ENCODE measurements at regions of chr2 and their contacts with region 1.

Region 1: GRCh38 chr2:178112202-178113152 is at the start of gene RBM45:
- DNase-seq: peak; percentile 68 to 91 (median 78)
- ATAC-seq: peak; percentile 97
- H3K4me3 ChIP-seq: peak within 1 kb of the TSS; percentile 90
- H3K4me3 Mint-ChIP-seq: peak within 1 kb of the TSS; percentile 92 to 96 (median 94)
- H3K27ac ChIP-seq: peak within 1 kb of the TSS; percentile 71
- H3K27ac Mint-ChIP-seq: peak within 1 kb of the TSS; percentile 80 to 93 (median 88)
- H3K4me1 ChIP-seq: peaks cover 6 to 14% of the 10 kb centered on the region in 2 donors
- H3K4me1 Mint-ChIP-seq: peaks cover 20 to 47% (median 39%) of the 10 kb centered on the region in 7 donors
- H3K27me3 ChIP-seq: no peaks in the 10 kb centered on the region
- H3K27me3 Mint-ChIP-seq: peaks cover 0 to under 1% (median 0%) of the 10 kb centered on the region in 5 donors
- total RNA-seq, gene RBM45: 8.0 to 26.7 (median 17.5) TPM

Region 2: DNA sequence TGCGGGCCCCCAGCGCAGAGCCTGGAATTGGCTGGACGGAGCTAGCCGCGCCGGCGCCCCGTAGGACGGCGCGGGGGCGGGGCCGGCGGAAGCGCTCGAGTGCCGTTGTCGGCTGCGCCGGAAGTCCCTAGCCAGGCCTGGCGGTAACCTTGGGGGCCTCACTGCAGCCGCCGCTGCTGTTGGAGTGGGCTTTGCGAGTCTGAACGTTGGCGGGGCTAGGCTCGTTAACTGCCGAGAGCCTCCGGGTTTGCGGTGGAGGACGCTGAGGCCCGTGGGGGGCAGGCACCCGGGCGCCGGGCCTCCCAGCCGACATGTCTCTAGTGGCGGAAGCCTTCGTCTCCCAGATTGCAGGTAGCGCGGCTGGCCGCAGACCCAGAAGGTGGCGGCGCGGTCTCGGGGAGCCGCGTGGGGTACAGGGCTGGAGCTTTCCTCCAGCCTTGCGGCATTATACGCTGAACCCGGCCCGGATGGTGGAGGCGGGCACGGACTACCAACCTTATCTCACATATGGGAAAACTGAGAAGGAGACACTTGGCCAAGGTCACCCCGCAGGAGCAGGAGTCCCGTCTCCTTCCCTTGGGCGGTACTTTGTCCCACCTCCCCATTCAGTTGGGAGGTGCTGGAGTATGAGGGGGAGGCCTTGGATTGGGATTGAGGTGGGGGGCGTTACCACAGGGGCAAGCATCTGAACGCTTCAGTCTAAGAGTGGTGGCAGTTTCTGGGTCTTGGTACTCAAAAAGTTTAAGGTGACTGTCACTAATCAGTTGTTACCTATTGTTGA is 1843.0 kb before region 1 on chr2 and contains the start of gene MTX2:
- CTCF ChIA-PET with region 1: no interaction called
- POLR2A ChIA-PET with region 1: no interaction called
- intact Hi-C with region 1: loop called in 1 of 2 experiments (anchors 10 kb)
- DNase-seq: peak; percentile 48 to 80 (median 75)
- ATAC-seq: peak; percentile 92
- H3K4me3 ChIP-seq: peak within 1 kb of the TSS; percentile 97
- H3K4me3 Mint-ChIP-seq: peak within 1 kb of the TSS; percentile 95 to 99 (median 97)
- H3K27ac ChIP-seq: peak within 1 kb of the TSS; percentile 84
- H3K27ac Mint-ChIP-seq: peak within 1 kb of the TSS; percentile 70 to 97 (median 92)
- H3K4me1 ChIP-seq: peaks cover 7 to 8% of the 10 kb centered on the region in 2 donors
- H3K4me1 Mint-ChIP-seq: peaks cover 16 to 46% (median 39%) of the 10 kb centered on the region in 7 donors
- H3K27me3 ChIP-seq: no peaks in the 10 kb centered on the region
- H3K27me3 Mint-ChIP-seq: peaks cover 0 to 19% (median 9%) of the 10 kb centered on the region in 5 donors
- total RNA-seq, gene MTX2: 6.6 to 14.3 (median 9.3) TPM

Region 3: GRCh38 chr2:178093471-178093870 is 19.0 kb before region 1 on chr2:
- CTCF ChIA-PET with region 1: no interaction called
- POLR2A ChIA-PET with region 1: no interaction called
- intact Hi-C with region 1: no loop called
- DNase-seq: no peak
- ATAC-seq: no peak
- H3K4me3 ChIP-seq: no peak overlapping the region
- H3K4me3 Mint-ChIP-seq: no peak overlapping the region
- H3K27ac ChIP-seq: no peak overlapping the region
- H3K27ac Mint-ChIP-seq: no peak overlapping the region
- H3K4me1 ChIP-seq: no peaks in the 10 kb centered on the region
- H3K4me1 Mint-ChIP-seq: no peaks in the 10 kb centered on the region
- H3K27me3 ChIP-seq: no peaks in the 10 kb centered on the region
- H3K27me3 Mint-ChIP-seq: peaks cover 0 to 13% (median 6%) of the 10 kb centered on the region in 5 donors

Region 4: GRCh38 chr2:178193823-178194599 is 81.5 kb after region 1 on chr2 and contains the start of gene OSBPL6:
- CTCF ChIA-PET with region 1: no interaction called
- POLR2A ChIA-PET with region 1: no interaction called
- intact Hi-C with region 1: loop called in 1 of 2 experiments (anchors 1 kb)
- DNase-seq: peak; percentile 10 to 82 (median 41)
- ATAC-seq: peak; percentile 87
- H3K4me3 ChIP-seq: peak within 1 kb of the TSS; percentile 46
- H3K4me3 Mint-ChIP-seq: peak within 1 kb of the TSS; percentile 56 to 83 (median 77)
- H3K27ac ChIP-seq: no peak within 1 kb of the TSS
- H3K27ac Mint-ChIP-seq: no peak within 1 kb of the TSS
- H3K4me1 ChIP-seq: peaks cover 6% of the 10 kb centered on the region in 2 donors
- H3K4me1 Mint-ChIP-seq: peaks cover 6 to 19% (median 13%) of the 10 kb centered on the region in 7 donors
- H3K27me3 ChIP-seq: peaks cover 18% of the 10 kb centered on the region in 2 donors
- H3K27me3 Mint-ChIP-seq: peaks cover 45 to 59% (median 54%) of the 10 kb centered on the region in 5 donors
- total RNA-seq, gene OSBPL6: 0.05 to 1.1 (median 0.44) TPM in 4 of 5 experiments, not detected in the other

Region 5: GRCh38 chr2:178414266-178415247 is 302.1 kb after region 1 on chr2:
- CTCF ChIA-PET with region 1: interaction called, 3 read pairs
- POLR2A ChIA-PET with region 1: interaction called, 3 read pairs
- intact Hi-C with region 1: loop called (anchors 1 kb)
- DNase-seq: peak; percentile 50 to 77 (median 64)
- ATAC-seq: peak; percentile 86
- H3K4me3 ChIP-seq: peak overlapping the region; percentile 53
- H3K4me3 Mint-ChIP-seq: peak overlapping the region; percentile 83 to 98 (median 90)
- H3K27ac ChIP-seq: peak overlapping the region; percentile 72
- H3K27ac Mint-ChIP-seq: peak overlapping the region; percentile 85 to 99 (median 94)
- H3K4me1 ChIP-seq: peaks cover 6 to 7% of the 10 kb centered on the region in 2 donors
- H3K4me1 Mint-ChIP-seq: peaks cover 5 to 58% (median 23%) of the 10 kb centered on the region in 7 donors
- H3K27me3 ChIP-seq: no peaks in the 10 kb centered on the region
- H3K27me3 Mint-ChIP-seq: peaks cover 0 to 3% (median 0%) of the 10 kb centered on the region in 5 donors

Region 6: DNA sequence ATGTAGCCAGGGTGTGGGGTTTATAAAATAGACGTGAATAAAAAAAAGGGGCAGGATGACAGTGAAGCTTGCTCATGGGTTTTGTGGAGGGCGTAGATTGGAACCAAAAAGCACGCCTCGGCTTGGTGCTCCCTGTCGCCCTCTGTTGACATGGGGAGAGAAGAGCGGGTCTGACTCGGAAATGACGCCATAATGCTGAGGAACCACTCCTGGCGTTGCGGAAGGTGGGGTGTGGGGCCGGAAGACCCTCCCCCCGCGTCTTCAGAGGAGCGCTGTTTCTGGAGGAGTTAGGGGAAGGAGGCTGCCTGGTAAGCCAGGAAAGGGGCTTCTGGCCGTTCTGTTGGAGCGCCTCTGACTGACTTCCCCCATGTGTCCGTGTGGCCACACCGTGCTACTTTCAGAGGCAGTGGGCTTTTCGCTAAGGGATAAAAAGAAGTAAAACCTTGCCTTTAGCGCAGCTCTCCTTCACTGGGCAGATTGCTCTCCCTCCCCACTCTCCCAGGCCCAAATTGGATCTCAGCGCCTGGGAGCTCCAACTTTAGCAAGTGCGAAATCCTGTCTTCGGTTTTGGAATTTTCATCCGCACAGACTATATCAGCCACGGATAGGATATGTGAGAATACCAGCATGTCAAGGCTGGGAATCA is 410.6 kb after region 1 on chr2:
- CTCF ChIA-PET with region 1: no interaction called
- POLR2A ChIA-PET with region 1: no interaction called
- intact Hi-C with region 1: loop called (anchors 2 to 5 kb)
- DNase-seq: peak; percentile 65 to 85 (median 80)
- ATAC-seq: peak; percentile 100
- H3K4me3 ChIP-seq: peak overlapping the region; percentile 93
- H3K4me3 Mint-ChIP-seq: peak overlapping the region; percentile 84 to 96 (median 94)
- H3K27ac ChIP-seq: peak overlapping the region; percentile 75
- H3K27ac Mint-ChIP-seq: peak overlapping the region; percentile 80 to 96 (median 91)
- H3K4me1 ChIP-seq: peaks cover 7 to 10% of the 10 kb centered on the region in 2 donors
- H3K4me1 Mint-ChIP-seq: peaks cover 14 to 58% (median 22%) of the 10 kb centered on the region in 7 donors
- H3K27me3 ChIP-seq: no peaks in the 10 kb centered on the region
- H3K27me3 Mint-ChIP-seq: no peaks in the 10 kb centered on the region

Region 7: GRCh38 chr2:180006781-180007579 is 1894.5 kb after region 1 on chr2 and contains the start of gene CWC22:
- CTCF ChIA-PET with region 1: no interaction called
- POLR2A ChIA-PET with region 1: no interaction called
- intact Hi-C with region 1: loop called in 1 of 2 experiments (anchors 5 kb)
- DNase-seq: peak; percentile 73 to 93 (median 89)
- ATAC-seq: peak; percentile 96
- H3K4me3 ChIP-seq: peak within 1 kb of the TSS; percentile 96
- H3K4me3 Mint-ChIP-seq: peak within 1 kb of the TSS; percentile 92 to 100 (median 96)
- H3K27ac ChIP-seq: peak within 1 kb of the TSS; percentile 93
- H3K27ac Mint-ChIP-seq: peak within 1 kb of the TSS; percentile 98 to 100 (median 99)
- H3K4me1 ChIP-seq: peaks cover 8 to 11% of the 10 kb centered on the region in 2 donors
- H3K4me1 Mint-ChIP-seq: peaks cover 19 to 54% (median 49%) of the 10 kb centered on the region in 7 donors
- H3K27me3 ChIP-seq: no peaks in the 10 kb centered on the region
- H3K27me3 Mint-ChIP-seq: peaks cover 0 to 3% (median 0%) of the 10 kb centered on the region in 5 donors
- total RNA-seq, gene CWC22: 14.4 to 32.0 (median 23.5) TPM

Measured in naive thymus-derived CD4-positive, alpha-beta T cell (primary cell).